ENCODE measurements at regions of chr4 and their contacts with region 1.

Region 1: DNA sequence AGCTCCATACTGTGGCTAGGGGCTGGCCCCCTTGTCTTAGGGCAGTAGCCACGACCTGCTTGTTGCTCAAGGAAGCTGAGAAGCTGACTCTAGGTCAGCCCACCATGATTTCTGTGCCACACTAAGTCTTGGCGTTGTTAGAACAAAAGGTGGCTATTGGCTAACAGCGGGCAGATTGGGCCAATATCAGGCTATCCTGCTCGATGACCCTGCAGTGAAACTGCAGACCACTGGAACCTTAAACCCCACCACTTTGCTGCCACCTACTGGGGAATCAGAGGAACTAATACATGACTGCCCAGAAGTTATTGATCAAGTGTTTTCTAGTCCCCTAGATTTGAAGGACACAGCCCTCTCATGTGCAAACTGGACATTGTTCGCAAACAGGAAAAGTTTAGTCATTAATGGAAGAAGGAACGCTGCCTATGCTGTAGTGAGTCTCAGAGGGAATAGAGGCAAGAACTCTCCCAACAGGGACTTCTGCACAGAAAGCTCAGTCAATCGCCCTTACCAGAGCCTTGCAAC is 17.0 kb upstream of the PAPSS1 start:
- DNase-seq: no peak
- H3K4me3 ChIP-seq: no peak overlapping the region
- H3K27ac ChIP-seq: no peak overlapping the region
- H3K27me3 ChIP-seq: peaks cover 5% of the 10 kb centered on the region
- CTCF ChIP-seq: peak; percentile 84

Region 2: DNA sequence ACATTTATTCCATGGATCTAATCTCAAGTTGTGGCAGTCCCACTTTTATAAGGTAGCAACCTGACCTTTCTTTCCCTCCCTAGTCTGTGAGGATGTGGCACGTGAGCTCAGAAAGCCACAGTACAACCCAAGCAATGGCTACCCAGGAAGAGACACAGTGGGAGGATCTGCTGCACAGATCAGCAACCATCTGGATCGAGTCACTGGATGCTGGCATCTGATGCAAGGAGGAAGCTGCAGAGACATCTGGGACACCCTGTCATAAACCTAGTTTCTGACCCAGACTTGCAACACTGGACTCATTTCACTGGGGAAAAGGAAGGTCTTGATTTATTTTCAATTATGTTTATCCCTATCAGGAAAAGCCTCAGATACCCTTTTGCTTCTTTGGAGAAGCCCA is 344.0 kb before region 1 on chr4:
- CTCF ChIA-PET with region 1: no interaction called
- POLR2A ChIA-PET with region 1: no interaction called
- DNase-seq: no peak
- H3K4me3 ChIP-seq: no peak overlapping the region
- H3K27ac ChIP-seq: no peak overlapping the region
- H3K27me3 ChIP-seq: no peaks in the 10 kb centered on the region
- CTCF ChIP-seq: no peak

Region 3: DNA sequence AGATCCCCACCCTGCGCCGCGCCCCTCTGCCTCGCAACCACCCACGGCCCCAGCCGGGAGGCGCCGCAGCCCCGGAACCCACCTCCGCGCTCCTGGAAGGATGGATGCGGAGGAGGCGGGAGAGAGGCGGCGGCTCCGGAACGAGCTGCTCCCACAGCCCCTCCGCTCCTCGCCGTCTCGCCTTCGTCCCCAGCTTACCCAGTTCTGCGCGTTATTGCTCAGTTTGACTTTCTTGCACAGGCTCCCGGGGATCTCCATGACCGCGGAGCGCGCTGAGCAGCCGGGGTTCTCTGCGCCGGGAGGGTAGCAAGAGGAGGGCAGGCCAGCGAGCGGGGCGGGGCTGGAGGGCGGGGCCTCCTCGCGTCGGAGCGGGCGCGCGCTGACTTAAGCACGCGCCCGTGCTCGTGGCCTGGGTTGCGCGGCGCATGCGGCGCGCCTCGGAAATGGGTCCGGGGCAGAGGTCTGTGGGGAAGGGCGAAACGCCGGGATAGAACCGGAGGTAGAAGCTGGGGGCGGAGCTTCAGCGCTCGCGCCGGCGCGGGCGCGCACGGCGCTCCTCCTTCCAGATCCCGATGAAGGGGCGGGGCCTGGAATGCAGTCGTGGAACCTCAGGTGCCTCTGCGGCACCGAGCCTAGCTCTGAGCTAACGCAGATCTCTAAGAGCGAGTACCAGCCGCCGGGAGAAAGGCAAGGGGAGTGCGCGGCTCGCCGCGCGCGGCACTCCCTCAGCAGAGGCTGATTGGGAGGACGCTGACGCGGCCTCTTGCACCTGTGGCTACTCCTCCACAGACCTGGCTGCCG is 16.9 kb before region 1 on chr4 and contains the start of gene PAPSS1:
- CTCF ChIA-PET with region 1: interaction called, 39 read pairs
- POLR2A ChIA-PET with region 1: interaction called, 5 read pairs
- DNase-seq: peak; percentile 91
- H3K4me3 ChIP-seq: peak within 1 kb of the TSS; percentile 81
- H3K27ac ChIP-seq: peak within 1 kb of the TSS; percentile 90
- H3K27me3 ChIP-seq: no peaks in the 10 kb centered on the region
- CTCF ChIP-seq: no peak
- polyA plus RNA-seq, gene PAPSS1: 79.0 and 95.5 TPM in 2 replicates

Region 4: GRCh38 chr4:107725281-107725859 is 11.6 kb before region 1 on chr4:
- CTCF ChIA-PET with region 1: interaction called, 39 read pairs
- POLR2A ChIA-PET with region 1: interaction called, 5 read pairs
- DNase-seq: no peak
- H3K4me3 ChIP-seq: no peak overlapping the region
- H3K27ac ChIP-seq: no peak overlapping the region
- H3K27me3 ChIP-seq: no peaks in the 10 kb centered on the region
- CTCF ChIP-seq: no peak

Region 5: DNA sequence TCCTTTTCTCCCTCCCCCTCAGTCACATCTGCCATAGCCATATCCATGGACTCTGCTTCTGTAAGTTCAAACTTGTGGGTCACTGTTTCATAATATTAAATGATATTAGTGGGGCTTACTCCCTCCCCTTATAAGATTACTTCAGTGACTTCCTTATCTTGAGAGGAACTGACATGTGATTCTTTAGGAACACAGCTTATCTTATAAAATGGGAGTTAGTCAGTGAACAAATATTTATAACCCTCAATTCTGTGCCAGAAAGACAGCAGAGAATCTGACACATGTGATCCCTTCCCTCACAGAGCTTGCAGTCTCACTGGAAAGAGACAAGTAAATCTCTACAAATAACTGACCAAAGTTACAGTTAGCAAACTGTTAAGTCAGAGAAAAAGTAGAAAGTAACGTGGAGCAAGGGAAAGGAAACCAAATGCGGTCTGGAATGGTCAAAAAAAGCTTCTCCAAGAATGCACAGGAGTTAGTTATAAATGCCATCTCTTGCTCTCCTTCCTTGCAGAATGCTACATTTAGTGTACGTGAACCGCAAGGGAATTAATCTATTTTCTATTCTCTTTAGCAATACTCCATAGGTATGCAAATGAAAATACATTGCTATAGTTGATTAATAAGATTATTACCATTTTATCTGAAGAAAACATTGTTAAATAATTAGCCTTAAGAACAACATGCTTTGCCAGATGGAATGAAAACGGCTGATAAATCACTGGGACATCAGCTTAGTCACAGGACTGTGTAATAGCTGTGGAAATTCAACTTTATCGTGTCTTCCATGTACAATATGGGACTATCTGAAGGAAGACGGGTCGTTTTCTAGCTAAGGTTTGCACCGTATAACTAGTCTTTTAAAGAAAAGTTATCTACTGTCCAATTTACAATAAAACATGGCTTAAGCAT is 116.7 kb after region 1 on chr4:
- CTCF ChIA-PET with region 1: no interaction called
- POLR2A ChIA-PET with region 1: no interaction called
- DNase-seq: no peak
- H3K4me3 ChIP-seq: no peak overlapping the region
- H3K27ac ChIP-seq: no peak overlapping the region
- H3K27me3 ChIP-seq: no peaks in the 10 kb centered on the region
- CTCF ChIP-seq: no peak